ENCODE measurements at regions of chr17 and their contacts with region 1.

Region 1: GRCh38 chr17:82450170-82451106 is at the start of gene CYBC1:
- DNase-seq: peak; percentile 86 to 97 (median 95)
- ATAC-seq: peak; percentile 65
- H3K4me3 ChIP-seq: peak within 1 kb of the TSS; percentile 57 to 77
- H3K4me3 Mint-ChIP-seq: peak within 1 kb of the TSS; percentile 90
- H3K27ac ChIP-seq: peak within 1 kb of the TSS; percentile 87 to 94
- H3K27ac Mint-ChIP-seq: peak within 1 kb of the TSS; percentile 95
- H3K4me1 ChIP-seq: peaks cover 26% of the 10 kb centered on the region
- H3K4me1 Mint-ChIP-seq: peaks cover 40% of the 10 kb centered on the region
- H3K27me3 ChIP-seq: no peaks in the 10 kb centered on the region
- H3K27me3 Mint-ChIP-seq: no peaks in the 10 kb centered on the region
- CTCF ChIP-seq: no peak
- total RNA-seq, gene CYBC1: 52.9 to 63.9 TPM

Region 2: GRCh38 chr17:82292251-82293154 is 157.9 kb before region 1 on chr17:
- CTCF ChIA-PET with region 1: no interaction called
- POLR2A ChIA-PET with region 1: no interaction called
- intact Hi-C with region 1: loop called (anchors 2 to 5 kb)
- DNase-seq: peak; percentile 85 to 98 (median 90)
- ATAC-seq: peak; percentile 85
- H3K4me3 ChIP-seq: peak overlapping the region; percentile 65 to 78
- H3K4me3 Mint-ChIP-seq: peak overlapping the region; percentile 88
- H3K27ac ChIP-seq: peak overlapping the region; percentile 88 to 96
- H3K27ac Mint-ChIP-seq: peak overlapping the region; percentile 94
- H3K4me1 ChIP-seq: peaks cover 26% of the 10 kb centered on the region
- H3K4me1 Mint-ChIP-seq: peaks cover 40% of the 10 kb centered on the region
- H3K27me3 ChIP-seq: no peaks in the 10 kb centered on the region
- H3K27me3 Mint-ChIP-seq: no peaks in the 10 kb centered on the region
- CTCF ChIP-seq: no peak

Region 3: DNA sequence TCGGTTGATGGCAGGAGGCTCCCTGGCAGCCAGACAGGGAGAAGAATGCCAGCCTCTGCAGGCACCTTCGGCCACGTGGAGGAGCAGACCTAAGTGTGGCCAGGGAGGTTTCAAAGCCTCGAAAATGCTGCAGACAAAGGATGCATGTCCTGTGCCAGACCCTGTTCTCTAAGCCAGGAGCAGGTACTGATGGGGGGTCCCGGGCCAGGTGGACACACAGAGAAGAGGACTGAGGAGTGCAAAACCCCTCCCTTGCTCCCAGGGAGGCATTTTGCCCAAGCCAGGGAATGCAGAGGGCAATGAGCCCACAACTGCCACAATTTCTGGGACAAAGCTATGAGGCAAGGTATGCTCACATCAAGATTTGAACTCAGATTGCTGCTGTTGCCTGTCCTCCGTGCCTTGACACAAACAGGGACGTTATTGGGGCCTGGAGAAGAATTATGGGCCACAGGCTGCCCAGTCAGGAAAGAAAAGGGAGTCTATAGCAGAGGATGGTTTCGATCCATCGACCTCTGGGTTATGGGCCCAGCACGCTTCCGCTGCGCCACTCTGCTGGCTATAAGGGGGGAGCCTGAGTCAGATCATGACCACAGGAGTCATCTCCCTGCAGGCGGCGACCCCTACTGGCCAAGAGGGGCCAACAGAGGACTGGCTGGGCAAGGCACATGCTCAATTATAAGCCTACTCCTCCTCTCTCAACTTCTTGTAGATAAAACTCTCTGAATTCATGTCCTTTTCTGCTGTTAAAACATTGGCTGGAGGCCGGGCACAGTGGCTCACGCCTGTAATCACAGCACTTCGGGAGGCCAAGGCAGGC is 44.0 kb after region 1 on chr17:
- CTCF ChIA-PET with region 1: no interaction called
- POLR2A ChIA-PET with region 1: no interaction called
- intact Hi-C with region 1: loop called in 1 of 2 experiments (anchors 2 kb)
- DNase-seq: peak; percentile 79 to 94 (median 90)
- ATAC-seq: peak; percentile 76
- H3K4me3 ChIP-seq: no peak overlapping the region
- H3K4me3 Mint-ChIP-seq: peak overlapping the region; percentile 68
- H3K27ac ChIP-seq: peak overlapping the region in 1 of 2 experiments; percentile 57
- H3K27ac Mint-ChIP-seq: peak overlapping the region; percentile 80
- H3K4me1 ChIP-seq: peaks cover 19% of the 10 kb centered on the region
- H3K4me1 Mint-ChIP-seq: peaks cover 24% of the 10 kb centered on the region
- H3K27me3 ChIP-seq: no peaks in the 10 kb centered on the region
- H3K27me3 Mint-ChIP-seq: no peaks in the 10 kb centered on the region
- CTCF ChIP-seq: peak; percentile 67

Measured in CD8-positive, alpha-beta T cell (primary cell).